B cell (primary cell): ENCODE measurements at regions of chr16 and their contacts with region 1.

Region 1: DNA sequence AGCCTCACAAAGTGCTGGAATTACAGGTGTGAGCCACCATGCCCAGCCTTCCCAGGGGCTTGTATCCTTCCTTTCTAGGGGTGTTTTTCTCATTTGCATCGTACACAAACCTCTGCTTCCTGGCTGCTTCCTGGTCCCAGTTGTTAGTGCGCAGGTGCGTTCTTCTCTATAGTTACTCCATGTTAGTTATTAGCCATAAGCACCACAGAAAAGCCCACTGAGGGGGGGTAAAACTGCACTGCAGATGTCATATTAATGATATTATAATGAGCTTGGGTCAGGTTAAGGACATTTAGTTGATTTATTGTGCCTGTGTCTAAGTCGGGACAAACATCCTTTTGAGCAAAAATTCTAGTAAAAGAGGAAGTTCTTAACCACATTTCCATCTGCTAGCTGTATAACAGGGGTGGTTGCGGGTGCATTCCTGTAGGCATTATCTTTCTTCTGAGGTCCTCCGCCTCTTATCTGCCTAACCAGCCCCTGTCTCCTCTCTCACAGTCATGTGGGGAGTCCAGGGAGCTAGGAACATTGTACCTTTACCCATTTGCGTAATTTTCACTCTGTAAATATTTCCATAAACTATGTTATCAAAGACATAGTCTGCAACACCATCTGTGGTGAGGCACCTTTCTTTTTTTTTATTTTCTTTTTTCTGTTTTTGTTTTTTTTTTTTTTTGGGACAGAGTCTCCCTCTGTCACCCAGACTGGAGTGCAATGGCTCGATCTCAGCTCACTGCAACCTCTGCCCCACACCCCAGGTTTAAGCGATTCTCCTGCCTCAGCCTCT is 23.6 kb upstream of the ATF7IP2 start:
- DNase-seq: peak; percentile 64
- ATAC-seq: peak; percentile 76
- H3K4me3 ChIP-seq: peak overlapping the region in 3 of 5 experiments; percentile 3 to 32 (median 16)
- H3K4me3 Mint-ChIP-seq: peak overlapping the region; percentile 54
- H3K27ac ChIP-seq: peak overlapping the region in 1 of 2 donors; percentile 4
- H3K27ac Mint-ChIP-seq: peak overlapping the region; percentile 84
- H3K4me1 ChIP-seq: peaks cover 14 to 15% of the 10 kb centered on the region in 2 donors
- H3K4me1 Mint-ChIP-seq: peaks cover 11% of the 10 kb centered on the region
- H3K27me3 ChIP-seq: no peaks in the 10 kb centered on the region
- H3K27me3 Mint-ChIP-seq: no peaks in the 10 kb centered on the region
- CTCF ChIP-seq: no peak

Region 2: GRCh38 chr16:10228546-10229178 is 133.6 kb before region 1 on chr16:
- CTCF ChIA-PET with region 1: no interaction called
- POLR2A ChIA-PET with region 1: no interaction called
- intact Hi-C with region 1: no loop called
- DNase-seq: peak; percentile 30
- ATAC-seq: no peak
- H3K4me3 ChIP-seq: no peak overlapping the region
- H3K4me3 Mint-ChIP-seq: peak overlapping the region; percentile 10
- H3K27ac ChIP-seq: peak overlapping the region in 1 of 2 donors; percentile 19
- H3K27ac Mint-ChIP-seq: peak overlapping the region; percentile 22
- H3K4me1 ChIP-seq: peaks cover 36 to 43% of the 10 kb centered on the region in 2 donors
- H3K4me1 Mint-ChIP-seq: peaks cover 30% of the 10 kb centered on the region
- H3K27me3 ChIP-seq: peaks cover 0 to 5% (median 3%) of the 10 kb centered on the region in 4 experiments
- H3K27me3 Mint-ChIP-seq: peaks cover 17% of the 10 kb centered on the region
- CTCF ChIP-seq: no peak

Region 3: GRCh38 chr16:10332241-10332640 is 30.0 kb before region 1 on chr16:
- CTCF ChIA-PET with region 1: no interaction called
- POLR2A ChIA-PET with region 1: interaction called, 5 read pairs
- intact Hi-C with region 1: loop called (anchors 1 kb)
- DNase-seq: no peak
- ATAC-seq: no peak
- H3K4me3 ChIP-seq: no peak overlapping the region
- H3K4me3 Mint-ChIP-seq: no peak overlapping the region
- H3K27ac ChIP-seq: no peak overlapping the region
- H3K27ac Mint-ChIP-seq: no peak overlapping the region
- H3K4me1 ChIP-seq: peaks cover 24 to 36% of the 10 kb centered on the region in 2 donors
- H3K4me1 Mint-ChIP-seq: peaks cover 41% of the 10 kb centered on the region
- H3K27me3 ChIP-seq: no peaks in the 10 kb centered on the region
- H3K27me3 Mint-ChIP-seq: no peaks in the 10 kb centered on the region
- CTCF ChIP-seq: no peak